Endothelial cell of umbilical vein (primary cell): ENCODE measurements at regions of chr3 and their contacts with region 1.

Region 1: GRCh38 chr3:112293368-112294321 is at the start of gene SLC9C1:
- DNase-seq: peak; percentile 86
- H3K4me3 ChIP-seq: peak within 1 kb of the TSS; percentile 18 to 51 (median 41)
- H3K27ac ChIP-seq: peak within 1 kb of the TSS; percentile 58
- H3K4me1 ChIP-seq: no peaks in the 10 kb centered on the region
- H3K27me3 ChIP-seq: peaks cover 0 to 4% of the 10 kb centered on the region in 2 experiments
- CTCF ChIP-seq: peak; percentile 51 to 54
- POLR2A ChIP-seq: peak; percentile 15
- total RNA-seq, gene SLC9C1: 0.09 TPM in 1 of 2 replicates, not detected in the other

Region 2: DNA sequence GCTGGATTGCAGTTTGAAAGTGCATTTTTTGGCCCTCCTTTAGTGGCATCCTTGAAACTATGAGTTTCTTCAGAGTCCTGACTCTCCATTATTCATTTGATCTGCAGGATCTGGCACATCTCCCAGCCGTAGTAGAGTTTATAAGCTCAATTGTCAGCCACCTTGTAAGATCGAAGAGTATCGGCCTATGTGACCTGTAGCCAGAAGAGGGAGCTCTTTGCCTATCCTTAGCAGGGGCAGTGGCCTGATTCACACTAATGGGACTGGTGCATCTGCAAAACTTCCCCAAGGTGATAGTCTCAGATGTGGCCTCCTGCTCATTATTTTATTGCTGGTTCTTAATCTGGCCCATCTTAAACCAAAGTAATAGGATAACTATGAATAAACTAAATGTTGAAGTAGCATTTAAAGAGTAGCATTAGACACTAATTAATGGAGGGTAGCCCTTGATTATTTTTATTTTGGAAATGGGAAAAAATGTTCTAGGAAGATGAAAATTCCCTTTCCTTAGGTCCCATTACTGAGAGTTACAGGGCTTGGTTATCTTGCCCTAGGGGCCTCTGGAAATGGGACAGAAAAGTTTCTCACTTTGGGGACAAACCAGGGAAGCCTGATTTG is 181.8 kb before region 1 on chr3:
- CTCF ChIA-PET with region 1: interaction called, 27 read pairs
- POLR2A ChIA-PET with region 1: no interaction called
- dilution Hi-C with region 1: no loop called
- intact Hi-C with region 1: loop called (anchors 5 kb)
- DNase-seq: peak; percentile 59
- H3K4me3 ChIP-seq: no peak overlapping the region
- H3K27ac ChIP-seq: no peak overlapping the region
- H3K4me1 ChIP-seq: peaks cover 7% of the 10 kb centered on the region
- H3K27me3 ChIP-seq: no peaks in the 10 kb centered on the region
- CTCF ChIP-seq: peak; percentile 70 to 79
- POLR2A ChIP-seq: no peak

Region 3: GRCh38 chr3:112321867-112322649 is 28.4 kb after region 1 on chr3:
- CTCF ChIA-PET with region 1: interaction called, 19 read pairs
- POLR2A ChIA-PET with region 1: no interaction called
- dilution Hi-C with region 1: no loop called
- intact Hi-C with region 1: loop called (anchors 1 kb)
- DNase-seq: no peak
- H3K4me3 ChIP-seq: no peak overlapping the region
- H3K27ac ChIP-seq: no peak overlapping the region
- H3K4me1 ChIP-seq: no peaks in the 10 kb centered on the region
- H3K27me3 ChIP-seq: peaks cover 2 to 6% of the 10 kb centered on the region in 2 experiments
- CTCF ChIP-seq: no peak
- POLR2A ChIP-seq: no peak

Region 4: GRCh38 chr3:112437146-112438022 is 143.7 kb after region 1 on chr3:
- CTCF ChIA-PET with region 1: interaction called, 39 read pairs
- POLR2A ChIA-PET with region 1: no interaction called
- dilution Hi-C with region 1: no loop called
- intact Hi-C with region 1: no loop called
- DNase-seq: peak; percentile 33
- H3K4me3 ChIP-seq: no peak overlapping the region
- H3K27ac ChIP-seq: no peak overlapping the region
- H3K4me1 ChIP-seq: no peaks in the 10 kb centered on the region
- H3K27me3 ChIP-seq: no peaks in the 10 kb centered on the region
- CTCF ChIP-seq: peak; percentile 36 to 41
- POLR2A ChIP-seq: no peak

Region 5: GRCh38 chr3:112531358-112531781 is 237.7 kb after region 1 on chr3:
- CTCF ChIA-PET with region 1: interaction called, 44 read pairs
- POLR2A ChIA-PET with region 1: no interaction called
- dilution Hi-C with region 1: no loop called
- intact Hi-C with region 1: loop called (anchors 1 kb)
- DNase-seq: peak; percentile 53
- H3K4me3 ChIP-seq: no peak overlapping the region
- H3K27ac ChIP-seq: no peak overlapping the region
- H3K4me1 ChIP-seq: no peaks in the 10 kb centered on the region
- H3K27me3 ChIP-seq: no peaks in the 10 kb centered on the region
- CTCF ChIP-seq: no peak
- POLR2A ChIP-seq: no peak

Region 6: GRCh38 chr3:112642912-112643506 is 349.4 kb after region 1 on chr3:
- CTCF ChIA-PET with region 1: interaction called, 5 read pairs
- POLR2A ChIA-PET with region 1: interaction called, 3 read pairs
- dilution Hi-C with region 1: no loop called
- intact Hi-C with region 1: loop called (anchors 2 kb)
- DNase-seq: peak; percentile 83
- H3K4me3 ChIP-seq: peak overlapping the region in 1 of 3 experiments; percentile 12
- H3K27ac ChIP-seq: no peak overlapping the region
- H3K4me1 ChIP-seq: peaks cover 28% of the 10 kb centered on the region
- H3K27me3 ChIP-seq: no peaks in the 10 kb centered on the region
- CTCF ChIP-seq: peak; percentile 82 to 86
- POLR2A ChIP-seq: no peak